ENCODE measurements at regions of chr4 and their contacts with region 1.

Region 1: GRCh38 chr4:13627606-13628301 is at the start of gene BOD1L1:
- DNase-seq: peak; percentile 84
- ATAC-seq: peak; percentile 99
- H3K4me3 ChIP-seq: peak within 1 kb of the TSS; percentile 72 to 95 (median 79)
- H3K27ac ChIP-seq: peak within 1 kb of the TSS; percentile 87 to 94 (median 88)
- H3K4me1 ChIP-seq: peaks cover 30 to 36% of the 10 kb centered on the region in 2 donors
- H3K27me3 ChIP-seq: no peaks in the 10 kb centered on the region
- CTCF ChIP-seq: peak in 4 of 5 experiments; percentile 28 to 57 (median 48)
- POLR2A ChIP-seq: peak; percentile 55 to 69
- total RNA-seq, gene BOD1L1: 11.9 to 14.7 (median 13.0) TPM

Region 2: DNA sequence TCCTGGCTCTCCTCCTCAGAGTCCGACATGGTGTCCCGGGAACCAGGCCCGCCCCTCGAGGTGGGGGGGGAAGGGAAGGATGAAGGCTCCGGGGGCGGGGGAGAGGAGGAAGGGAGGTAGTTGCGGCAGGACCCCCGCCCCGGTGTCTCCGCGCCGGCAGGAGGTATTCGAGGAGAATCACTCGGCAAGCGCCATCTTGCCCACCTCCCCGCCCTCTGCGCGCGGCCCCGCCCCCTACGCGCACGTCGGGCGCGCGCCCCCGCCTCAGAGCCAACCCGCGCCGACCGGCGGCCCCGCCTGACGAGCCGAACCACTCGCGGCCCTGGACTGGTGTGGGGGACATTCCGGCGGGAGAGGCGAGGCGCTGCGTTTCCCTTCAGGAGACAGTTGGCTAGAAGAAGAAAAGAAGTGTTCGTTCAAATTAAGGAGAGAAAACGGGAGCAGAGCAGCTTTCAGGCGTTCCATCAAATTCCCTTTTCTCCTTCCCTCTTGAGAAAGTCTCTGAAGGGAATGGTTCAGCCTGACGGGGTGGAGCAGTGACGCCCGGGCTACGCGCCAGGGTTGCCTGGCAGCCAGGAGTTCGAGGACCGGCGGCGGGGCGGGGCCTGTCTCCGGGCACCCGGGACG is 143.5 kb before region 1 on chr4 and contains the start of gene RAB28:
- in situ Hi-C with region 1: no loop called
- intact Hi-C with region 1: loop called (anchors 5 kb)
- DNase-seq: peak; percentile 88 to 90
- ATAC-seq: peak; percentile 96
- H3K4me3 ChIP-seq: peak within 1 kb of the TSS; percentile 83 to 98 (median 87)
- H3K27ac ChIP-seq: peak within 1 kb of the TSS; percentile 86 to 94 (median 92)
- H3K4me1 ChIP-seq: peaks cover 16 to 23% of the 10 kb centered on the region in 2 donors
- H3K27me3 ChIP-seq: peaks cover 0 to 9% (median 0%) of the 10 kb centered on the region in 3 donors
- CTCF ChIP-seq: no peak
- POLR2A ChIP-seq: peak; percentile 59 to 67
- total RNA-seq, gene RAB28: 3.9 to 8.0 (median 6.7) TPM

Region 3: GRCh38 chr4:13654158-13654797 is 26.5 kb after region 1 on chr4:
- in situ Hi-C with region 1: no loop called
- intact Hi-C with region 1: loop called (anchors 2 kb)
- DNase-seq: peak; percentile 34 to 42
- ATAC-seq: peak; percentile 70 to 75
- H3K4me3 ChIP-seq: peak overlapping the region; percentile 45 to 63 (median 50)
- H3K27ac ChIP-seq: no peak overlapping the region
- H3K4me1 ChIP-seq: peaks cover 0 to 7% of the 10 kb centered on the region in 2 donors
- H3K27me3 ChIP-seq: peaks cover 0 to 7% (median 0%) of the 10 kb centered on the region in 3 donors
- CTCF ChIP-seq: peak in 3 of 5 experiments; percentile 58 to 76 (median 61)
- POLR2A ChIP-seq: no peak

Region 4: GRCh38 chr4:15457406-15458201 is 1829.8 kb after region 1 on chr4:
- in situ Hi-C with region 1: no loop called
- intact Hi-C with region 1: loop called (anchors 10 kb)
- DNase-seq: no peak
- ATAC-seq: peak; percentile 36 to 70
- H3K4me3 ChIP-seq: no peak overlapping the region
- H3K27ac ChIP-seq: peak overlapping the region in 2 of 4 donors; percentile 0 to 42
- H3K4me1 ChIP-seq: peaks cover 0 to 13% of the 10 kb centered on the region in 2 donors
- H3K27me3 ChIP-seq: no peaks in the 10 kb centered on the region
- CTCF ChIP-seq: peak; percentile 52 to 77 (median 65)
- POLR2A ChIP-seq: no peak